Cardiac septum (tissue), 1 donor: ENCODE measurements at regions of chr12 and their contacts with region 1.

Region 1: DNA sequence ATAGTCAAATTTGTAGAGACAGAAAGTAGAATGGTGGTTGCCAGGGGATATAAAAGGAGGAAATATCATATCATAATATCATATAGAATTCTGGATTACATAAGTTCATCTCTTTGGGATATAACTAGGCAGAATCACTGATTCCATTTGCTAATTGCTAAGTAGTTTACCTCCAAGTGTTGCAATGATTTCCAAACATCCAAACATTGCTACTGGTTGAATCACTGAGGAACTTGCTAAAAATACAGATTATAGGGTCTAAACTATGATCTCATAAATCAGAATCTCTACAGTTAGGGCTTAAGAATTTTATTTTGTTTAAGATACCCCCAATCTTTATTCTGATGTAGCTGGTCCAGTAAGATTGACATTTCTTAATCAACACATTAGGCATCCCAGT is 16.1 kb upstream of the TAS2R42 start:
- DNase-seq: no peak

Region 2: GRCh38 chr12:10227648-10228047 is 975.2 kb before region 1 on chr12:
- intact Hi-C with region 1: no loop called
- DNase-seq: no peak

Region 3: DNA sequence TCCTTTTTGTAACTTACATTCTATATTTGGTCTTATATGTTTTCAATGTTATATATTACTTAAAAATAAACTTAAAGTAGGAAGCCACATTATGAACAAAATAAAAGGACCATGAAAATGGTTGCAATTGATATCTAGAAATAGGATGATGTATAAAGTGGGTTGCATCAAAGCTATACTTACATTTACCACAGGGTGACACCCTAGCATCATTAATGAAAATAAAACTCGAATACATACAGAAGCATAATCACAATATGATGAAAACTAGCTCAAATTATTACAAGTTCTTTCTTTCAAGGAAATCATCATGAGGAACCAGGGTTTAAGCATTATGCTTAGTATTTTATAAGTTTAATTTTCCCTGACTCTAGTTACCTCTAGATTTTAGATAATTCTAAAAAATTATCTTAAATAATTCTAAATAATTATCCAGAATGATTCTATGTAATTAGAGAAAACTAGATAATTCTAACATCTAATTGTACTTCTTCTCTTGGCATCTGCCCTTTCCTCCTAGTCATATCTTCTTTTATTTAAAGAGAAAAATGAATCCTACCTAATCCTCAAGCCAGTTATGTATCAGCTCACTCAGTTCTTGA is 431.6 kb before region 1 on chr12:
- intact Hi-C with region 1: loop called (anchors 2 kb)
- DNase-seq: no peak